Activated CD8-positive, alpha-beta T cell treated with anti-CD3 and anti-CD28 coated beads for 36 hours (primary cell): ENCODE measurements at regions of chr2 and their contacts with region 1.

Region 1: DNA sequence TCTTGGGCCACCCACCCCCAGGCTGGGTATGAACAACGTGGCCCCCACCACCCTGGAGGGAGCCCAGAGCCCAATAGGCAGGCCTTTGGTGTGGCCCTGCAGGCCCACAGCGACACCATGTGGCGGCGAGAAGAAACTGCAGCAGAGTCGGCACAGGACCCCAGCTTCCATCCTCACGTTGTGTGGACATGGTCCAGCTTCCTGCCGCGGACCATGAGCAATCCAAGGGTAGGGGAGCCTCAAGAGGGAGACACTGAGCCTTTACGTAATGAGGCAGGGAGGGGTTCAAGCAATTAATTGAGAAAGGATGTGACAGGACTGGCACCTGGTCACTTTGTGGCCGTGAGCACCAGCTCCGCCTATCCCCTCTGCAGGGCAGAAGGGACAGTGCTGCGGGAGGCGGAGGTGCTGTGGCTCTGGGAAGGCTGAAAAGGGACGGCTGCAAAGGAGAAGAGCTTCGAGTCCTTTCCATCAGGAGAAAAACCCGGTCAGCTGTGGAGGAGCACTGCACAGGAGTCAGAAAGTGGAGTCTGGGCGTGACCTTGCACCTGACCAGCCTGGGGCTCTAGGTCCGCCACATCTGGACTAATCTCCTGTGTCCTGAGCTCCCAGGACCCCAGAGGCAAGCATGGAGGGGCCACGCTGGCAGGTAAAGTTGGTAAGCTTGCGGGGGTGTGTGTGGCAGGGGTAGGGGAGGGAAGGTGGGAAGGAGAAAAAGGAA is 44.8 kb downstream of the TMEM37 start:
- DNase-seq: peak; percentile 52
- ATAC-seq: peak; percentile 86
- H3K4me3 Mint-ChIP-seq: no peak overlapping the region
- H3K27ac Mint-ChIP-seq: no peak overlapping the region
- H3K4me1 Mint-ChIP-seq: no peaks in the 10 kb centered on the region
- H3K27me3 Mint-ChIP-seq: peaks cover 6% of the 10 kb centered on the region
- CTCF ChIP-seq: peak; percentile 94

Region 2: GRCh38 chr2:119290859-119291587 is 185.4 kb before region 1 on chr2:
- CTCF ChIA-PET with region 1: no interaction called
- POLR2A ChIA-PET with region 1: no interaction called
- intact Hi-C with region 1: no loop called
- DNase-seq: peak; percentile 7
- ATAC-seq: no peak
- H3K4me3 Mint-ChIP-seq: no peak overlapping the region
- H3K27ac Mint-ChIP-seq: no peak overlapping the region
- H3K4me1 Mint-ChIP-seq: no peaks in the 10 kb centered on the region
- H3K27me3 Mint-ChIP-seq: no peaks in the 10 kb centered on the region
- CTCF ChIP-seq: no peak

Region 3: GRCh38 chr2:119407430-119408220 is 68.8 kb before region 1 on chr2:
- CTCF ChIA-PET with region 1: interaction called, 20 read pairs
- POLR2A ChIA-PET with region 1: no interaction called
- intact Hi-C with region 1: loop called (anchors 5 kb)
- DNase-seq: peak; percentile 42
- ATAC-seq: peak; percentile 66
- H3K4me3 Mint-ChIP-seq: no peak overlapping the region
- H3K27ac Mint-ChIP-seq: no peak overlapping the region
- H3K4me1 Mint-ChIP-seq: no peaks in the 10 kb centered on the region
- H3K27me3 Mint-ChIP-seq: peaks cover 3% of the 10 kb centered on the region
- CTCF ChIP-seq: peak; percentile 72

Region 4: DNA sequence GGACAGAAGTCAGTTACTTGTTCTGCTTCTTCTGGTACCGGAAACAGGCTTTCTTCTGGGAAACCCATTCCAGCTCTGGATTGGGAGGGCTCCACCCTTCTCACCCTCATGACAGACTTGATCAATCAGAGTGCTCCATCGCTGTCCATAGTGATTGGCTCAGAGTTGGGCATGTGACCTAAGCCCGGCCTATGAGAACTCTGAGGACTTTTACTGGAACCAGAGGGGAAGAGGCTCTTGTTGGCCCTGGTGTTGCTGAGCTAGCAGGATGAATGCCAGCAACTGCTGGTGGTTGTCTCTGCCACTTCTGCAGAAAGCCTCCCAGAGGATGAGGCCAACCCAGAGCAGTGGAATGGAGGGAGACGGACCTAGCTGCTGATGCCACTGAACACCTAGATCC is 11.5 kb before region 1 on chr2:
- CTCF ChIA-PET with region 1: interaction called, 13 read pairs
- POLR2A ChIA-PET with region 1: no interaction called
- intact Hi-C with region 1: no loop called
- DNase-seq: no peak
- ATAC-seq: no peak
- H3K4me3 Mint-ChIP-seq: no peak overlapping the region
- H3K27ac Mint-ChIP-seq: no peak overlapping the region
- H3K4me1 Mint-ChIP-seq: no peaks in the 10 kb centered on the region
- H3K27me3 Mint-ChIP-seq: peaks cover 3% of the 10 kb centered on the region
- CTCF ChIP-seq: no peak

Region 5: GRCh38 chr2:119513832-119514231 is 37.4 kb after region 1 on chr2:
- CTCF ChIA-PET with region 1: no interaction called
- POLR2A ChIA-PET with region 1: no interaction called
- intact Hi-C with region 1: no loop called
- DNase-seq: no peak
- ATAC-seq: no peak
- H3K4me3 Mint-ChIP-seq: no peak overlapping the region
- H3K27ac Mint-ChIP-seq: no peak overlapping the region
- H3K4me1 Mint-ChIP-seq: no peaks in the 10 kb centered on the region
- H3K27me3 Mint-ChIP-seq: peaks cover 21% of the 10 kb centered on the region
- CTCF ChIP-seq: no peak